ENCODE measurements at regions of chr22 and their contacts with region 1.

Region 1: DNA sequence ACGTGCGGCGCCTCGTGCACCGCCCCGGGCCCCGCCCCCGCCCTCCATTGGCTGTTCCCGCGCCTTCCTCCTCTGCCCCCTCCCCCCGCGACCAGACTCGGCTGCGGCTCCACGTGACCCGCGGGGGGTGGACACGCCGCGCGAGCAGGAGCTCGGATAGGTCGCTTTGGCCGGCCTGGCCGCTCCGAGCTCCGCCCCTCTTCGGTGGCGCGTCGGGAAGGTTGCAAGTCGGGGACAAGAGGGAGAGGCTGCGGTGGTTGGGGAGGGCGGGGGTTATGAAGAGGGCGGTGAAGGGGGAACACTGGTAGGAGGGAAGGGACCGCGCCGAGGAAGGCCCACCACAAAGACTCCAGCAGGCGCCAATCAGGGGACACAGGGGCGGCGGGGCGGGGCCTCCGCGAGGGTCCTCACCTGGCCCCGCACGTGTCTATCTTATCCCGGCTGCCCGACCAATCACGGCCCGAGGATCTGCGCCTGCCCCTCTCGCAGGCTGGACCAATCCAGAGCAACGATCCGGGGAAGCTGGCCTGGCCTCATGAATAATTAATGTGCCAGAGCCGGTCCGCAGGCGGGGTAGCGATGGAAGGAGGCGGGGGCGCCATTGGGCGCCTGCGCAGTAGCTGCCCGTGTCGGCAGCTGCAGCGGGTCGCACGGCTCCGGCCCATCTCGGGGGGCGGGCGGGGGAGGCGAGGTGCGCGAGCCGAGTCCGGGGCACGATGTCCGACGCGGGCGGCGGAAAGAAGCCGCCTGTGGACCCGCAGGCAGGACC is at the start of gene TEF:
- DNase-seq: peak; percentile 97
- H3K4me3 Mint-ChIP-seq: peak within 1 kb of the TSS; percentile 78
- H3K27ac Mint-ChIP-seq: peak within 1 kb of the TSS; percentile 95
- H3K4me1 Mint-ChIP-seq: peaks cover 6% of the 10 kb centered on the region
- H3K27me3 Mint-ChIP-seq: no peaks in the 10 kb centered on the region
- CTCF ChIP-seq: no peak
- total RNA-seq, gene TEF: 2.2 and 4.2 TPM in 2 replicates

Region 2: DNA sequence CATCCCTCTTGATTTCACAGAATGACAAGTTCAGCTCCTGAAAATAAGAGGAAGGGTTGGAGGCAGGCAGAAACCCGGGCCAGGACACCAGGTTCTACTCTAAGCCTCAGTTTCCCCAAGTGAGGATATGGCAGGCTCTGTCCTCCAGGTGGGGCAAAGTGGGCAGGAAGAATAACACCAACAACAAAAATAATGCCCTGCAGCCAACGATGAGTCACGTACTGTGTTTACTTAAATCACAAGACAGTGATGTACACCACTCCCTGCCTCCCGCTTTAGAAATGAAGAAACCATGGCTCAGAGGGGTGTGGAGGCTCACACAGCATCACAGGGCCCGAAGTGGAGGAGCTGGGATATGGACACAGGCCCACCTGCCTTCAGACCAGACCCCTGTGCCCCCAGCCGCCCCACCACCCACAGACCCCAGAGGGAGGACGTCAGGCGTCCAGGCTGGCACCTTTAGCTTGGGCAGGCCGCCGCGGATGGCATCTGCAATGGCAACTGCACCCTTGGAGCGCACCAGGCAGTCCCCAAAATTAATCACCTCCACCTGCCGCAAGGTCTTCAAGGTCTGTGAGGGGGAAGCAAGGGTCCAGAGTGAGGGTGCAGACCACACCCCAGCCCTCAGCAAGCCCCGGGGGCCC is 125.1 kb before region 1 on chr22:
- CTCF ChIA-PET with region 1: no interaction called
- POLR2A ChIA-PET with region 1: no interaction called
- intact Hi-C with region 1: loop called (anchors 2 kb)
- DNase-seq: peak; percentile 89
- H3K4me3 Mint-ChIP-seq: no peak overlapping the region
- H3K27ac Mint-ChIP-seq: peak overlapping the region; percentile 75
- H3K4me1 Mint-ChIP-seq: peaks cover 9% of the 10 kb centered on the region
- H3K27me3 Mint-ChIP-seq: no peaks in the 10 kb centered on the region
- CTCF ChIP-seq: peak; percentile 35

Region 3: DNA sequence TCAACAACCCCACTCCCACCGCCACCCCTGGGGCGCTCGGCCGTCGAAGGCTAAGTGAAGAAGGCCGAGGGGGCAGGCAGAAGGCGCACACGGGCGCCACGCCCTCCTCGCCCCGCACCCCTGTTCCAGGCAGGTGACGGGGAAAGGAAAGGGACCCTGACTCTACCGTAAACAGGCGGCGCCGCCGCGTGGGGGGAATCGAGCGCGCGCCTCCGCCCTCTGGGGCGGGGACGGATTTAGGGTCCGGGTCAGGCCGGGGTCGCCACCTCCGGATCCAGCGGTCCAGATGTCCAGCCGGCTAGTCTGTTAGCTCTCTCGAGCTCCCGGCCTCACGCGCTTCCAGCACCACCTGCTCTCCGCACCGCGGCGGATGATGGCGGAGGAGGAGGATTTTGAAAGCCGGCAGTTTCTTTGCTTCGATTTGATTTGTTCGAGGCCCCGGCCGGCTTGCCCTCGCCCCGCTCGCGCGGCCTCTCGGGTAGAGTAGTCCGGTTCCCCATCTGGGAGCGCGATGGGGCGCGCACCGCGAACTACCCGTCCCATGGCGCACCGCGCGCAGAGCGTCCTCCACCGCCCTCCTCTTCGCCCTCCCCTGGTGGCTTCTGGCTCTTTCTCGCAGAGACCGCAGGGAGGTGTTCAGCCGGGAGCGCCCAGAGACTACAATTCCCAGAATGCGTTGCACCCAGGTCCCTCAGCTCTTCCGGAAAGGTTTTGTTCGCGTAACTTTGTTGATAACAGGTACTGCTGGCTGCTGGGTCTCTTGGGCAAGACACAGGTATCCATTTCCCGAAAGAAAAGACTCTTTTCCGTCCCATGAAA is 95.5 kb before region 1 on chr22 and contains the start of gene RANGAP1:
- CTCF ChIA-PET with region 1: no interaction called
- POLR2A ChIA-PET with region 1: interaction called, 35 read pairs
- intact Hi-C with region 1: loop called (anchors 10 kb)
- DNase-seq: peak; percentile 99
- H3K4me3 Mint-ChIP-seq: peak within 1 kb of the TSS; percentile 80
- H3K27ac Mint-ChIP-seq: peak within 1 kb of the TSS; percentile 85
- H3K4me1 Mint-ChIP-seq: peaks cover 29% of the 10 kb centered on the region
- H3K27me3 Mint-ChIP-seq: no peaks in the 10 kb centered on the region
- CTCF ChIP-seq: no peak
- total RNA-seq, gene RANGAP1: 84.7 and 117 TPM in 2 replicates

Region 4: GRCh38 chr22:41367039-41367679 is 14.4 kb before region 1 on chr22:
- CTCF ChIA-PET with region 1: interaction called, 10 read pairs
- POLR2A ChIA-PET with region 1: interaction called, 46 read pairs
- intact Hi-C with region 1: no loop called
- DNase-seq: peak; percentile 93
- H3K4me3 Mint-ChIP-seq: peak overlapping the region; percentile 47
- H3K27ac Mint-ChIP-seq: no peak overlapping the region
- H3K4me1 Mint-ChIP-seq: peaks cover 9% of the 10 kb centered on the region
- H3K27me3 Mint-ChIP-seq: no peaks in the 10 kb centered on the region
- CTCF ChIP-seq: peak; percentile 17

Region 5: GRCh38 chr22:41448189-41448808 is 66.8 kb after region 1 on chr22:
- CTCF ChIA-PET with region 1: interaction called, 3 read pairs
- POLR2A ChIA-PET with region 1: interaction called, 49 read pairs
- intact Hi-C with region 1: no loop called
- DNase-seq: peak; percentile 100
- H3K4me3 Mint-ChIP-seq: peak overlapping the region; percentile 96
- H3K27ac Mint-ChIP-seq: peak overlapping the region; percentile 97
- H3K4me1 Mint-ChIP-seq: peaks cover 11% of the 10 kb centered on the region
- H3K27me3 Mint-ChIP-seq: no peaks in the 10 kb centered on the region
- CTCF ChIP-seq: no peak